K562 (cell line): ENCODE measurements at regions of chr2 and their contacts with region 1.

Region 1: DNA sequence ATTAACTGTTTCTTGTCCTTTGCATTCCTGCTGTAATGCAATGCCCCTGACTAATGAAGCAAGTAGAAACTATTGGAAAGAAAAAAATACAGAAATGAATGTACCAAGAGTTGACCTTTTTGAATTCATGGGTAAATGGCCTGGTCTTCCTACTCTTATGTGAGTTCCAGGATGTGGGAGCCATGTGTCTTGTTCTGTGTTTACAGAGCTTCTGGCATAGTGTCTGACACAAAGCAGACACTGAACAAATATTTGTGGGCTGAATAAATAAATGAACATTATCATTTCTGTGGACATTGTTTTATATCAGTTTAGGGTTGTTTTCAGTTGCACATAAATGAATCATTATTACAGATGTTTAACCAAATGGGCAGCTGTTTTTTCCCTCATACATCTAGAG is 155.5 kb downstream of the CD8B2 start:
- DNase-seq: no peak
- ATAC-seq: no peak
- H3K4me3 ChIP-seq: no peak overlapping the region
- H3K27ac ChIP-seq: no peak overlapping the region
- H3K4me1 ChIP-seq: no peaks in the 10 kb centered on the region
- H3K27me3 ChIP-seq: no peaks in the 10 kb centered on the region
- CTCF ChIP-seq: no peak
- EP300 ChIP-seq: no peak
- POLR2A ChIP-seq: no peak
- RAD21 ChIP-seq: no peak

Region 2: GRCh38 chr2:106869512-106870275 is 227.0 kb after region 1 on chr2:
- CTCF ChIA-PET with region 1: no interaction called
- POLR2A ChIA-PET with region 1: no interaction called
- in situ Hi-C with region 1: no loop called
- intact Hi-C with region 1: loop called (anchors 10 kb)
- DNase-seq: no peak
- ATAC-seq: no peak
- H3K4me3 ChIP-seq: no peak overlapping the region
- H3K27ac ChIP-seq: no peak overlapping the region
- H3K4me1 ChIP-seq: no peaks in the 10 kb centered on the region
- H3K27me3 ChIP-seq: no peaks in the 10 kb centered on the region
- CTCF ChIP-seq: no peak
- EP300 ChIP-seq: no peak
- POLR2A ChIP-seq: no peak
- RAD21 ChIP-seq: no peak